BJ (cell line): ENCODE measurements at regions of chr3 and their contacts with region 1.

Region 1: DNA sequence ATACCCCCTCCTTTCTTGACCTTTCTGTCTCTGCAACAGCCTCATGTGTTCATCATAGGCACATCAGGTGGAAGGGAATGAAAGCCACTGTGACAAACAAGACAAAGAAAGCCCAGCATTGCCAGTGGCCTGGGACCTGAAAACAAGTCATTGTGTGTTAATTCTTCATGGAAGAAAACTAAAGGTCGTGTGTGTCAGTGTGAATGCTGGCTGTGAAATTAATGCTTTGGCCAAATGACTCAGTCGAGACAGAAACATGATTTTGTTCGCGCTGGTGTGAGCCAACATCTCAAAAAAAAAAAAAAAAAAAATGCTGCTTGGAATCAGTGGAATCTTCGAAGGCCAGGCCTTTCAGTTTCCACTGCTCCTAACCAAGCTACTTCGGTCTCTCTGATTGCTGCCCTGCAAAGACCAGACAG is 386.5 kb upstream of the PROK2 start:
- DNase-seq: no peak
- H3K4me3 ChIP-seq: no peak overlapping the region
- H3K27me3 ChIP-seq: peaks cover 3% of the 10 kb centered on the region
- CTCF ChIP-seq: no peak

Region 2: GRCh38 chr3:71753630-71754483 is 417.6 kb before region 1 on chr3 and contains the start of gene GPR27:
- CTCF ChIA-PET with region 1: no interaction called
- POLR2A ChIA-PET with region 1: interaction called, 23 read pairs
- DNase-seq: no peak
- H3K4me3 ChIP-seq: peak within 1 kb of the TSS; percentile 19
- H3K27me3 ChIP-seq: peaks cover 25% of the 10 kb centered on the region
- CTCF ChIP-seq: no peak
- polyA plus RNA-seq, gene GPR27: 0.02 TPM in 1 of 2 replicates, not detected in the other